ENCODE measurements at regions of chr15 and their contacts with region 1.

Region 1: DNA sequence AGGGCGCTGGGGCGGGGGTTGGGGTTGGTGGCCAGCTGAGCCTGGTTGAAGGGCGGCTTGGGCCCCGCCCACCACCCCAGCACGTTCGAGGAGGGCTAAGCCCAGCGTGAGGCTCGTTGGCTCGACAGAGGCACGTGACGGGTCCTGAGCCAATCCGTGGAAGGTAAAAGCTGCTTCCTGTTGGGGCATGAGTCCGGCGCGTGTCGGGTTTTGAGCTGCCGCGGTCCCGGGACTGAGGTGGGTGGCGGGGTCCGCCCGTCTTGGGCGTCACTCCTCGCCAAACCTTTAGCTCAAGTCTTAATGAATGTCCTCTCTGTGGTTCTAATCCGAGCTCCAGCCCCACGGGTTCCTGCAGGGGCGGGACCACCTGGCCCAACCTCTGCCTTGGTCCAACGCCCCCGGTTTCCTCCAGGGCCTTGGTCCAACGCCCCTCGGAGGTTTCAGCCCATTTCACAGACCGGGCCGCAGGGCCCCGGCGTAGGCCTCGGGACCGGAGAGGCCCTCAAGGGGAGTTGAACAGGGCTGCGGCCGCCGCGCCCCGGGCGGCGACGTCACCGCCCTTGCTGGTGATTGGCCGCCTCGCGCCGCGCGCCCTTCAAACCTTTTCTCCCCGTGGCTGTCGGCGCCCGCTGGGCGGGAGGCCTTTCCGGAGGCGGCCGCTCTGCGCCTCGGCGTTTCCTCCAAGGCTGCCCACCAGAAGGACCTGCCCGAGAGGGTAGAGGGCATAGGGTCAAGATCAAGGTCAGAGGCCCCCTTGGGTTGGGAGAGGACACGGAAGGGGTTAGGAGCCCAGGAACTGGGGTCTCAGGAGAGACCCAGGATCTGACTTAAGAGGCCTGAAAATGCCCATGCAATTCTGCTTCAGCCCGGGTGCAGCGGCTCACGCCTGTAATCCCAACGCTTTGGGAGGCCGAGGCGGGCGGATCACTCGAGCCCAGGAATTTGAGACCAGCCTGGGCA is at the start of gene RCCD1:
- DNase-seq: peak; percentile 95 to 96
- H3K4me3 ChIP-seq: peak within 1 kb of the TSS; percentile 36 to 89 (median 78)
- H3K27ac ChIP-seq: peak within 1 kb of the TSS; percentile 50 to 69 (median 54)
- H3K4me1 ChIP-seq: peaks cover 21 to 22% of the 10 kb centered on the region in 2 donors
- H3K27me3 ChIP-seq: no peaks in the 10 kb centered on the region
- CTCF ChIP-seq: no peak
- POLR2A ChIP-seq: peak in 1 of 2 donors; percentile 51
- total RNA-seq, gene RCCD1: 7.6 to 15.2 (median 9.9) TPM

Region 2: GRCh38 chr15:90994417-90995311 is 39.7 kb after region 1 on chr15 and contains the start of gene PRC1:
- intact Hi-C with region 1: loop called (anchors 2 kb)
- DNase-seq: peak; percentile 97 to 98
- H3K4me3 ChIP-seq: peak within 1 kb of the TSS; percentile 21 to 82 (median 60)
- H3K27ac ChIP-seq: peak within 1 kb of the TSS; percentile 64 to 85 (median 73)
- H3K4me1 ChIP-seq: peaks cover 0 to 6% of the 10 kb centered on the region in 2 donors
- H3K27me3 ChIP-seq: no peaks in the 10 kb centered on the region
- CTCF ChIP-seq: peak in 1 of 6 experiments; percentile 8
- POLR2A ChIP-seq: peak in 1 of 2 donors; percentile 68
- total RNA-seq, gene PRC1: 3.6 to 12.9 (median 7.2) TPM

Region 3: GRCh38 chr15:91049378-91050127 is 94.6 kb after region 1 on chr15:
- intact Hi-C with region 1: loop called (anchors 5 kb)
- DNase-seq: peak; percentile 56 to 63
- H3K4me3 ChIP-seq: no peak overlapping the region
- H3K27ac ChIP-seq: no peak overlapping the region
- H3K4me1 ChIP-seq: no peaks in the 10 kb centered on the region
- H3K27me3 ChIP-seq: no peaks in the 10 kb centered on the region
- CTCF ChIP-seq: peak in 5 of 6 experiments; percentile 21 to 60 (median 53)
- POLR2A ChIP-seq: no peak

Region 4: GRCh38 chr15:91238644-91239425 is 283.8 kb after region 1 on chr15:
- intact Hi-C with region 1: no loop called
- DNase-seq: no peak
- H3K4me3 ChIP-seq: no peak overlapping the region
- H3K27ac ChIP-seq: no peak overlapping the region
- H3K4me1 ChIP-seq: no peaks in the 10 kb centered on the region
- H3K27me3 ChIP-seq: no peaks in the 10 kb centered on the region
- CTCF ChIP-seq: no peak
- POLR2A ChIP-seq: no peak

Region 5: DNA sequence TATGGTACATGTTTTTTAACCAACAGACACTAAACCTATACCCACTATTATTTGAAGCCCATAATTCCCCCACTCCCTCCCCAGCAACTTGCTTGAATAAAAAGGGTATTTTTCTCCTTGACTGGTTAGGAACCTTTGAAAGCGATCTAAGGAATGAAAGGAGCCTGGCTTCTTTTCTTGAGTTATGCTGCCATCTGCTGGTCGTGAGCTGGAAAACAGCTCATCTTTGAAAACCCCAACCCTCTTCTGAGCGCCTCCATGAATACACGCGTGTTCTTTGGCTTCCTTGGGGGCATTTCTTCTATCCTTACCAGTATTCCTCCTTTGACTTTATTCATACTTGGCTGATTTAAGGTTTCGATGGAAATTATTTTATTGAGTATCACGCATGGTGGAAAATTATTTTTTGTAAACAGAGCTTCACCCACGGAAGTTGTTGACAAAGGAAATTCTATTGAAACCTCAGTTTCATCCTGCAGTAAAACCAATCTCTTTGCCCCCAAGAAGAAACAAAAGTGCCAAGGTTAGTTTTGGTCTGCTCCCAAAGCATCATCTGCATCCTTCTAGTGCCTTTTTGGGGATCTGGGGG is 316.7 kb after region 1 on chr15:
- intact Hi-C with region 1: loop called (anchors 5 kb)
- DNase-seq: peak; percentile 46 to 57
- H3K4me3 ChIP-seq: no peak overlapping the region
- H3K27ac ChIP-seq: no peak overlapping the region
- H3K4me1 ChIP-seq: no peaks in the 10 kb centered on the region
- H3K27me3 ChIP-seq: no peaks in the 10 kb centered on the region
- CTCF ChIP-seq: peak in 5 of 6 experiments; percentile 30 to 76 (median 73)
- POLR2A ChIP-seq: no peak